ENCODE measurements at regions of chr17 and their contacts with region 1.

Region 1: DNA sequence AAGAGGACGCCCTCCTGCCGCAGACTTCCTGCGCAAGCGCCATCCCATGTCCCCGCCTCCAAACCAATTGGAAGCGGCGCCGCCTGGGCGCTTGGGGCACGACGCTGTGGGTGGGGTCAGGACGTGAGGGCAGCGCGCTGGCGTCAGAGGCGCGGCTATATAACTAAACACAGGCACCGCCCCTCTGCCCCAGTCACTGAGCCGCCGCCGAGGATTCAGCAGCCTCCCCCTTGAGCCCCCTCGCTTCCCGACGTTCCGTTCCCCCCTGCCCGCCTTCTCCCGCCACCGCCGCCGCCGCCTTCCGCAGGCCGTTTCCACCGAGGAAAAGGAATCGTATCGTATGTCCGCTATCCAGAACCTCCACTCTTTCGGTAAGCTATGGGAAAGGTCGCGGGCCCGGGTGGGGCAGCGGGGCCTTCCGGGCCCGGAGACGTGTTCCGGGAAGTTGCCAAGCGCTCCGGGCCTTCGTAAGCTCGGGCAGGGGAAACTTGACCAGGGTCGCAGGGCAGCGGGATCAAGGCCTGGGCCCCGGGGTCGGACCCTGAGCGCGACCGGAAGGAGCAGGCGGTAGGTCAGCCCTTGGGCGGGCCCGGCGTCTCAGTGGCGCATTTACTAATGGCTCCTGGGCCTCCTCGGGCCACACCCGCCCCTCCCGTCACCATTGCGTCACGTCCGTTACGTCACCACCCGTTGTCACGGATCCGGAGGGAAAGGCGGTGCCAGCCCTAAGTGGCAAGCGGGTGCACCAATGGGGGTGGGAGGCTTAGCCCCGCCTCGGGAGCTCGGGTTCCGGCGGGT is at the start of gene EIF1:
- DNase-seq: peak; percentile 99
- ATAC-seq: peak; percentile 83
- H3K4me3 ChIP-seq: peak within 1 kb of the TSS; percentile 75
- H3K27ac ChIP-seq: peak within 1 kb of the TSS; percentile 91
- H3K4me1 ChIP-seq: peaks cover 3% of the 10 kb centered on the region
- H3K27me3 ChIP-seq: no peaks in the 10 kb centered on the region
- CTCF ChIP-seq: no peak
- POLR2A ChIP-seq: peak; percentile 99
- RAD21 ChIP-seq: no peak
- total RNA-seq, gene EIF1: 89.4 and 102 TPM in 2 replicates

Region 2: DNA sequence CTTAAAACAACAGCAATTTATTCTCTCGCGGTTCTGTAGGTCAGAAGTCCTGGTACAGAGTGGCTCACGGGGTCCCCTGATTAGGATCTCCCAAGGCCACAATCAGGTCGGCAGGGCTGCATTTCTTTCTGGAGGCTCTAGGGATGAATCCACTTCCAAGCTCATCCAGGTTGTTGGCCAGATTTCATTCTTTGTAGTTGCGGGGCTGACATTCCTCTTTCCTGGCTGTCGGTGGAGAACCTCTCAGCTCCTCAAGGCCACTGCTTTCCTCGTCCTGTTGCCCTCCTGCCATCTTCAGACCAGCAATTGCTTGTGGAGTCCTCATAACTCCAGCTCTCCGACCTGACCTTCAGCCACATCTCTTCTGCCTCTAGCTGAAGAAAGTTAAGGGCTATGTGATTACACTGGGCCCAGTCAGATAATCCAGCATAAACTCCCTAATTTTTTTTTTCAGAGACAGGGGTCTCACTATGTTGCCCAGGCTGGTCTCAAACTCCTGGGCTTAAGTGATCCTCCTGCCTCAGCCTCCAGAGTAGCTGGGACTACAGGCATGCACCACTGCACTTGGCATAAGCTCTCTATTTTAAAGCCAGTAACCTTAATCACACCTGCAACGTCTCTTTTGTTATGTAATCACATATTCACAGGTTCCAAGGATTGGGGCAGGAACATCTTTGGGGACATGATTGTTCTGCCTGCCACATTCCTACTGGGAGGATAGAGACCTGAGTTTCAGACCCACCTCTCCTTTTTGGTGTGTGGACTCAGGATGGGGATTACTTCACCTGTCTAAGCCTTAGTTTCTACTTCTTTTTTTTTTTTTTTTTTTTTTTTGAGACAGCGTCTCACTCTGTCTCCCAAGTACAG is 19.1 kb after region 1 on chr17:
- CTCF ChIA-PET with region 1: interaction called, 5 read pairs
- POLR2A ChIA-PET with region 1: interaction called, 12 read pairs
- dilution Hi-C with region 1: no loop called
- in situ Hi-C with region 1: no loop called
- intact Hi-C with region 1: no loop called
- DNase-seq: no peak
- ATAC-seq: no peak
- H3K4me3 ChIP-seq: no peak overlapping the region
- H3K27ac ChIP-seq: no peak overlapping the region
- H3K4me1 ChIP-seq: peaks cover 4% of the 10 kb centered on the region; the same call in 1 of the 2 replicates
- H3K27me3 ChIP-seq: peaks cover 9% of the 10 kb centered on the region; the same call in 1 of the 2 replicates
- CTCF ChIP-seq: no peak
- POLR2A ChIP-seq: no peak
- RAD21 ChIP-seq: no peak

Region 3: GRCh38 chr17:42566883-42567573 is 878.1 kb after region 1 on chr17 and contains the start of gene MLX:
- CTCF ChIA-PET with region 1: no interaction called
- POLR2A ChIA-PET with region 1: interaction called, 18 read pairs
- dilution Hi-C with region 1: no loop called
- in situ Hi-C with region 1: no loop called
- intact Hi-C with region 1: no loop called
- DNase-seq: peak; percentile 85
- ATAC-seq: peak; percentile 80
- H3K4me3 ChIP-seq: peak within 1 kb of the TSS; percentile 84
- H3K27ac ChIP-seq: peak within 1 kb of the TSS; percentile 95
- H3K4me1 ChIP-seq: peaks cover 16% of the 10 kb centered on the region
- H3K27me3 ChIP-seq: no peaks in the 10 kb centered on the region
- CTCF ChIP-seq: no peak
- POLR2A ChIP-seq: no peak
- RAD21 ChIP-seq: no peak
- total RNA-seq, gene MLX: 37.5 and 37.8 TPM in 2 replicates

Measured in IMR-90 (cell line).